Left lung (tissue), 14 donors: ENCODE measurements at regions of chr4 and their contacts with region 1.

Region 1: DNA sequence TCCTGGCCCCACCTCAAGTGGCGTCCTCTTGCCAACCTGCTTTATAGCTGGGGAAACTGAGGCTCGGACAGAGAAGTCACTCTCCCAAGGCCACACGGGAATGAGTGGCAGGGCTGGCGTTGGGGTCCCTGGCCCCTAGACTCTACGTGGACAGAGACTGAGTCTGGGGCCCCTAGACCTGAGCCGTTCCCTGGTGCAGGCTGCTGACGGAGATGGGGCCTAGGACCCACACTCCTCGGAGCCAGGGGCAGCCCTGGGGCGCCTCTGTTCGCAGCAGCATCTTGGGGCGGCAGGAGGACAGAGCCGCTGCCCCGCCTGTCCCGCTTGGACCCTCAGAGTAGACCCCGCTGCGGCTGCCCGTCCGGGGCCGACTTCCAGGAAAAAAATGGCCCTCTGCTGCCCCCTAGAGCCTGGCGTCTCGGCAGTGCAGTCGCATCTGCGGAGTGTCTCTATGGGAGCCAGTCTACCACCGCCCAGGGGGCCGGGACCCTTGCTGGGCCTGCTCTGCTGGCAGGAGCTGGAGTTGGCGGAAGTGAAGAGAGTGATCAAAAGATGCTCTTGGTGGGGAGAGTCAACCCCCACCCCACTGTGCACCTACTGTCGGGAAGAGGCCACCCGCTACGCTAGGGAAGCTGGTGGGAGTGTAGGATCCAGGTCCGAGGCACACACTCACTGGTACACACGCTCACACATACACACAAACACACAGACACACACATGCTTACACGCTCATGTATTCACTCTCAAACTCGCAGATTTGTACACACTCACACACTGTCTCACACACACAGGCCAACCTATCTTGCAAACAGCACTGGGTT is 220.1 kb downstream of the AFAP1 start:
- DNase-seq: peak; percentile 41 to 86 (median 56)
- ATAC-seq: peak; percentile 84
- H3K4me3 ChIP-seq: no peak overlapping the region
- H3K27ac ChIP-seq: no peak overlapping the region
- H3K4me1 ChIP-seq: no peaks in the 10 kb centered on the region
- H3K27me3 ChIP-seq: peaks cover 0 to 33% of the 10 kb centered on the region in 2 donors
- CTCF ChIP-seq: peak; percentile 84

Region 2: GRCh38 chr4:7192252-7193029 is 527.1 kb before region 1 on chr4 and contains the start of gene SORCS2:
- intact Hi-C with region 1: loop called in 1 of 2 experiments (anchors 10 kb)
- DNase-seq: peak; percentile 44 to 88 (median 73)
- ATAC-seq: peak; percentile 80
- H3K4me3 ChIP-seq: peak within 1 kb of the TSS; percentile 24 to 34
- H3K27ac ChIP-seq: no peak within 1 kb of the TSS
- H3K4me1 ChIP-seq: peaks cover 4 to 12% of the 10 kb centered on the region in 2 donors
- H3K27me3 ChIP-seq: peaks cover 19 to 87% of the 10 kb centered on the region in 2 donors
- CTCF ChIP-seq: peak; percentile 46 to 60
- polyA plus RNA-seq, gene SORCS2: 4.6 to 9.7 (median 6.5) TPM